ENCODE measurements at regions of chr7 and their contacts with region 1.

Region 1: DNA sequence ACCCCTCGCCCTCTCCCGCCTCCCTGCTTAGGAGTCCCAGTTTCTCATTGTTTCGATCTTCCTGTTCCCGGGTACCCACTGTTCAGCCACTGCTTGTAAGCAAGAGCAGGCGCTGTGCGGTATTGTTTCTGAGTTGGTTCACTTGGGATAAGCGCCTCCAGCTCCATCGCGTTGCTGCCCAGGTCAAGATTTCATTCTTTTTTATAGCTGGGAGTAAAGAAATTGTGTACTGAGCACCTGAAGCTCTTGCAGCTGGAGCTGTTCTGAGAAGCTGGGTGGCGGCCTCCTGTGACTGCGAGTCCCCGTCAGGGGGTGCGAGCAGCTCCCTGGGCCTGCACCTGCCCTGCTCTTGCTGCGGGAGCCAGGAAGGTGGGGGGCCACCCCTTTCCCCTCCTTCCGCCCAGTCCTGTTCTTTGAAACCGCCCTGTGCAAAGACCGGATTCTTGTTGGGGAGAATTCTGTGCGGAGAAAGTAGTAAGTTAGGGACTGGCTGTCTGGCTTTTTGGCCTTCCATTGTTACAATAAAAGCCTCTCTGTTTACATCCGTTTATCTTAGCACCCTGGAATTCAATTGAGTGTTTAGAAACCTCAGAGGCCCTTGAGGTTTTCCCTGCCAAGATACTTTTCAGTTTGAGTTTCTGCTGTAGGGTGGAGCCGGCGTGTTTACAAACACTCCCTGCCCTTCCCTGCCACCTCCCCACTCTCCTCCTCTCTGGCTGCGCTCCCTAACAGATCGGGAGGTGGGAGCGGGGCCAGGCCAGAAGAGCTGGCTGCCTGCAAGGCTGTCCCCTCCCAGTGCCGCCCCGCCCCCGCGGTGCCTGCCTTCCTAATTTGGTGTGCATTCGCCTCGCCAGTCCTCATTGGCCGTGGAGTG is 30.8 kb upstream of the AP5Z1 start:
- DNase-seq: peak; percentile 69 to 83
- ATAC-seq: peak; percentile 67 to 80 (median 77)
- H3K4me3 ChIP-seq: peak overlapping the region; percentile 36
- H3K4me3 Mint-ChIP-seq: peak overlapping the region; percentile 90
- H3K27ac ChIP-seq: peak overlapping the region; percentile 73
- H3K27ac Mint-ChIP-seq: peak overlapping the region; percentile 93 to 95
- H3K4me1 ChIP-seq: peaks cover 53% of the 10 kb centered on the region
- H3K4me1 Mint-ChIP-seq: peaks cover 69 to 70% of the 10 kb centered on the region in 2 donors
- H3K27me3 ChIP-seq: no peaks in the 10 kb centered on the region
- H3K27me3 Mint-ChIP-seq: no peaks in the 10 kb centered on the region
- CTCF ChIP-seq: no peak

Region 2: DNA sequence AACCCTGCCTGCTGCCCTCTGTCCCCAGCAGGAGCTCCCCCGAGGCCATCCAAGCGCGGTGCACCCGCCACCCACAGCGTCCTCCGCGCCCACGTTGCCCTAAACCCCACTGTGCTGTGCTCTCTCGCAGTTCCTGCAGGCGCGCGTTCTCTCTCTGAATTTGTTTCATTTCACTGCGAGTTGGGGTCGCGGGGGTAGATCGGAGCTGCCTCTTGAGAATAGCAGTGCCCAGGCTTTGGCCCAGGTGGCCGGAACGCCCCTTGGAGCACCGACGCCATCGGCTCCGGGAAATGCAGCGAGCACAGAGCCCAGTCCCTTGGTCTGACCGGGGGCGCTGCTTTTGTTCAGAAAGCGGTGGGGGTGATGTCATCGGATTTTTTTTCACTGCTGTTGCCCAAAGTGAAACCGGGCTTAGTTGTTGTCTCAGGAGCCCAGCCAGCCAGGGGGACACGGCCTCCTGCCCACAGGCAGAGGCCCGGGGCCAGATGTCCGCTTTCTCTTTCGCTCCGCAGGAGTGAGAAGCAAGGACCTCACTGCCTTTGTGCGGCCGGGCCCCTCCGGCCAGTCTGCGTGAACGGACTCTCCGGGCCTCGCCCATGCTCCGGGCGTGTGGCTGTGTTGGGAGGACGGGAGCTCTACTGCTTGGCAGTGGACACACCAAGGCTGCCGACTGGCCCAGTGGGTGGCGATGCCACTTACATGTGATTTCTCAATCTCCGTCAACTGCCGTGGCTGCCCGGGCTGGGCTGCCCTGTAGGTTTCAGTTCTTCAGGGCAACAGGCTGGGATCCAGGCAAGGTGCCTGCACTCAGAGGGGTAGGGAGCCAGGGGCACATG is 19.4 kb before region 1 on chr7:
- intact Hi-C with region 1: loop called (anchors 2 kb)
- DNase-seq: peak; percentile 64 to 77
- ATAC-seq: peak; percentile 84 to 88 (median 86)
- H3K4me3 ChIP-seq: peak overlapping the region; percentile 49
- H3K4me3 Mint-ChIP-seq: peak overlapping the region; percentile 95
- H3K27ac ChIP-seq: peak overlapping the region; percentile 92
- H3K27ac Mint-ChIP-seq: peak overlapping the region; percentile 96 to 97
- H3K4me1 ChIP-seq: peaks cover 29% of the 10 kb centered on the region
- H3K4me1 Mint-ChIP-seq: peaks cover 16 to 26% of the 10 kb centered on the region in 2 donors
- H3K27me3 ChIP-seq: no peaks in the 10 kb centered on the region
- H3K27me3 Mint-ChIP-seq: no peaks in the 10 kb centered on the region
- CTCF ChIP-seq: peak; percentile 10

Region 3: GRCh38 chr7:4775250-4775847 is 30.7 kb after region 1 on chr7 and contains the start of gene AP5Z1:
- intact Hi-C with region 1: loop called (anchors 1 kb)
- DNase-seq: peak; percentile 96 to 99
- ATAC-seq: peak; percentile 86 to 95 (median 89)
- H3K4me3 ChIP-seq: peak within 1 kb of the TSS; percentile 88
- H3K4me3 Mint-ChIP-seq: peak within 1 kb of the TSS; percentile 98
- H3K27ac ChIP-seq: peak within 1 kb of the TSS; percentile 97
- H3K27ac Mint-ChIP-seq: peak within 1 kb of the TSS; percentile 98 to 100
- H3K4me1 ChIP-seq: peaks cover 27% of the 10 kb centered on the region
- H3K4me1 Mint-ChIP-seq: peaks cover 31 to 41% of the 10 kb centered on the region in 2 donors
- H3K27me3 ChIP-seq: no peaks in the 10 kb centered on the region
- H3K27me3 Mint-ChIP-seq: no peaks in the 10 kb centered on the region
- CTCF ChIP-seq: no peak
- total RNA-seq, gene AP5Z1: 140 to 156 (median 143) TPM

Measured in natural killer cell (primary cell).